ENCODE measurements at regions of chr12 and their contacts with region 1.

Region 1: GRCh38 chr12:53220801-53221202 is 11.2 kb downstream of the RARG start:
- DNase-seq: peak; percentile 94
- ATAC-seq: peak; percentile 38
- H3K4me3 Mint-ChIP-seq: peak overlapping the region; percentile 90
- H3K27ac Mint-ChIP-seq: peak overlapping the region; percentile 98
- H3K4me1 Mint-ChIP-seq: peaks cover 75% of the 10 kb centered on the region
- H3K27me3 Mint-ChIP-seq: peaks cover 7% of the 10 kb centered on the region; the same call in 1 of the 2 replicates
- CTCF ChIP-seq: no peak

Region 2: DNA sequence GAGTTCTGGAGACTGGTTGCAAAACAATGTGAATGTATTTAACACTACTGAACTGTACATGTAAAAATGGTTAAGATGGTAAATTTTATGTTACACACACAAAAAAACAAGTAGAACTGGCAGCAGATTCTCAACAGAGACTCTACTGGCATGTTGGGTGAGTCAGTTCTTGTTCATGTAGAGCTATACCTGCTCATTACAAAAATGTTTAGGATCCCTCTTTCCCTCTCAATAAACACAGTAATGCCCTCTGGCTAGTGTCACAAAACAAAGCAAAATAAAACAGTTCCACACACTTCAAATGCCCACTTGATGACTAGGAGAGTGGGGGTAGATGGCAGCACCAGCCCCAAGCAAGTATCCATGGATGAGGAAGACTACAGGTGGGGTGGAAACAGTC is 54.0 kb before region 1 on chr12:
- CTCF ChIA-PET with region 1: no interaction called
- POLR2A ChIA-PET with region 1: no interaction called
- DNase-seq: no peak
- ATAC-seq: no peak
- H3K4me3 Mint-ChIP-seq: no peak overlapping the region
- H3K27ac Mint-ChIP-seq: no peak overlapping the region
- H3K4me1 Mint-ChIP-seq: 0 out of 2 replicates have a peak, but pooled peaks cover 5% of the 10 kb centered on the region
- H3K27me3 Mint-ChIP-seq: peaks cover 85% of the 10 kb centered on the region
- CTCF ChIP-seq: no peak

Region 3: DNA sequence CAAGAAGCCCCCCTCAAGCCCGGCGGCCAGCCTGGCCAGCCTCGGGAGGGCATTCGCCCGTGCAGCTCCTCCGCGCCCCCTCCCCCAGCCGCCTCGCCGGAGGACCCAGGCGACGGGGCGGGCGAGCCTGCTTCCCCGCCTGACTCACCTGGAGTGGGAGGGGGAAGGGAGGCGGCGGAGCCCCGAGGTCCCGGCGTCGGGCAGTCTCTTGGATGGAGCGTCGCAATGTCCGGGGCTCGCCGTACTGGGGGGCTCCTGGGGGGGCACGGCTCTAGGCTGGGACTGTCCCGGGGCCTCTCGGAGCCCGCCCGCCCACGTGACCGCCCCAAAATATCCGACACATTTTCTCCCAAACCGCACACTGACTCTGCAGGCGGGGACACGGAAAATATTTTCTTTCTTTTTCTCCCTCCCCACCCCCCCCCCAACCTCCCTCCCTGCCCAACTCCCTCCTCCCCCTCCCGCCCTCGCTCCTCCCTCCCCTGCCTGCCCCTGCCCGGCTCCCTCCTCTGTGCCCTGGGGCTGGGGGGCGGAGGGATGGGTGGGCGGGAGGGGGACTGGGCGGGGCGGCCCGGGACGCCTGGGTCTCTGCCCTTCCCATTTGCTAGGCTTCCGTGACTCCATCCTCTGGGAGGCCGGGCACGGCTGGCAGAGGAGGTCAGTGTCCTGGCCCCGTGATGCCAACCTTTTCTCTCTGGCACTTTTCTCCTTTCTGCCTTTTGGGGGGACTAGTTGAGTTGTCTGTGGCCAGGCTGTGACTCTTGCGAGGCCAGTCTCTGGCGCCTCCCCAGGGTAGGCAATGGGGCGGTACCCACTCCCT is 11.2 kb after region 1 on chr12 and contains the start of gene RARG:
- CTCF ChIA-PET with region 1: interaction called, 82 read pairs
- POLR2A ChIA-PET with region 1: interaction called, 7 read pairs
- DNase-seq: peak; percentile 57
- ATAC-seq: peak; percentile 43
- H3K4me3 Mint-ChIP-seq: peak within 1 kb of the TSS; percentile 82
- H3K27ac Mint-ChIP-seq: peak within 1 kb of the TSS; percentile 88
- H3K4me1 Mint-ChIP-seq: peaks cover 77% of the 10 kb centered on the region
- H3K27me3 Mint-ChIP-seq: peaks cover 5% of the 10 kb centered on the region; the same call in 1 of the 2 replicates
- CTCF ChIP-seq: no peak
- total RNA-seq, gene RARG: 68.1 to 77.2 TPM (median 69.7 TPM) in 3 replicates

Region 4: GRCh38 chr12:53241623-53242412 is 21.0 kb after region 1 on chr12:
- CTCF ChIA-PET with region 1: interaction called, 138 read pairs
- POLR2A ChIA-PET with region 1: interaction called, 6 read pairs
- DNase-seq: peak; percentile 66
- ATAC-seq: peak; percentile 75
- H3K4me3 Mint-ChIP-seq: 0 out of 2 replicates have a peak overlapping the region, but pooled peaks have one; percentile 6
- H3K27ac Mint-ChIP-seq: peak overlapping the region; percentile 18; the same call in 1 of the 2 replicates
- H3K4me1 Mint-ChIP-seq: peaks cover 45% of the 10 kb centered on the region
- H3K27me3 Mint-ChIP-seq: peaks cover 2% of the 10 kb centered on the region; the same call in 1 of the 2 replicates
- CTCF ChIP-seq: no peak

Region 5: DNA sequence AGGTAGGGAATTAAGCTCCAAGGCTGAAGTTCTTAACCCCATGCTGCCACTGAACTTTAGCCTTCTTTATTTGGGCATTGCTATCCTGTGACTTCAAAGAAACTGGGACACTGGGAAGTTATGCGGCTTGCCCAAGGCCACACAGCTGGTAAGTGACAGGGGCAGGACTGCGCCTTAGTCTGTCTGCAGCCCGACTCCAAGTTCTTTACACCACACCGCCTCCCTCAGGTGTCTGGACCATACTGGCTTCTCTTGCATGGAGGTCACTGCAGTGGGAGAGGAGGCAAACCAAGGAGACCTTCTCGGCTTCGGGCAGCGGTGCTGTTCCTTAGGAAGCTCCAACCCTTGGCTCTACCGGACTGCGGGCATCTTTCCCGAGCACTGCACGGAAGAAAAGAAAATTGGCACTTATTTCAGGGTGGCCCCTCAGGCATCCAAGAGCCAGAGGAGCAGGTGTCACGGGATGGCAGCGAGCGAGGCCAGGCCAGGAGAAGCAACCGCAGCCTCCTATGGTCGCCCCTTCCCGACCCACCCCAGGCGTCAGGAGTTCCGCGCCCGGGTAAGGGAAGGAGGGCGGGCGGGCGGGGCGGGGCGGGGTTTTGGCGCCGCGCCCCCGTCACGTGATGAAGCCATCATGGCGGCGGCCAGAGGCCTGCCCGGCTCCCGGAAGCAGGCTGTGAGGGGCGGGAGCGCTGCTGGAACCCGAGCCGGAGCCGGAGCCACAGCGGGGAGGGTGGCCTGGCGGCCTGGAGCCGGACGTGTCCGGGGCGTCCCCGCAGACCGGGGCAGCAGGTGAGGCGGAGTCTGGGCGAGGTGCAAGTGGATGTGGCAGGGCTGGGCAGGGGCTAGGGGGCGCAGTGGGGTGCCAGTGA is 30.9 kb after region 1 on chr12:
- CTCF ChIA-PET with region 1: interaction called, 188 read pairs
- POLR2A ChIA-PET with region 1: interaction called, 8 read pairs
- DNase-seq: peak; percentile 86
- ATAC-seq: peak; percentile 87
- H3K4me3 Mint-ChIP-seq: peak overlapping the region; percentile 93
- H3K27ac Mint-ChIP-seq: peak overlapping the region; percentile 94
- H3K4me1 Mint-ChIP-seq: peaks cover 25% of the 10 kb centered on the region
- H3K27me3 Mint-ChIP-seq: no peaks in the 10 kb centered on the region
- CTCF ChIP-seq: no peak

Region 6: DNA sequence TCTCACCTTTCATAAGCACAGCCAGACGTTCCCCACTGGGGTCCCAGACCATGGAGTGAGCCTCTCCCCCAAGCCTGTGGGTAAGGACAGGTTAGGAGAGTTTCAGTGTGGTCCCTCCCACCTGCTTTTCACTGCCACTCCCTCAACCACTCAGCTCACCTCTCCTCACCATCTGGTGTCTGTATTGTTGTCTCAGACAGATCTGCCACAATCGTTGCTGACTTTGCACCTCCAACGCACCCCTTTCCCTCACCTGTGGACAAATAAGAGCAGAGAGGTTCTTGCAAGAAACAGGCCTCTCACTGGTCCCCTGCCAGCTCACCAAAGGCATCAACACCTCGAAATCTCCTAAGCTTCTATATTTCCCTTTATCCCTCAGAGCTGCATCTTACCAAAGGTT is 87.5 kb after region 1 on chr12:
- CTCF ChIA-PET with region 1: no interaction called
- POLR2A ChIA-PET with region 1: no interaction called
- DNase-seq: no peak
- ATAC-seq: no peak
- H3K4me3 Mint-ChIP-seq: no peak overlapping the region
- H3K27ac Mint-ChIP-seq: no peak overlapping the region
- H3K4me1 Mint-ChIP-seq: no peaks in the 10 kb centered on the region
- H3K27me3 Mint-ChIP-seq: no peaks in the 10 kb centered on the region
- CTCF ChIP-seq: no peak

Region 7: DNA sequence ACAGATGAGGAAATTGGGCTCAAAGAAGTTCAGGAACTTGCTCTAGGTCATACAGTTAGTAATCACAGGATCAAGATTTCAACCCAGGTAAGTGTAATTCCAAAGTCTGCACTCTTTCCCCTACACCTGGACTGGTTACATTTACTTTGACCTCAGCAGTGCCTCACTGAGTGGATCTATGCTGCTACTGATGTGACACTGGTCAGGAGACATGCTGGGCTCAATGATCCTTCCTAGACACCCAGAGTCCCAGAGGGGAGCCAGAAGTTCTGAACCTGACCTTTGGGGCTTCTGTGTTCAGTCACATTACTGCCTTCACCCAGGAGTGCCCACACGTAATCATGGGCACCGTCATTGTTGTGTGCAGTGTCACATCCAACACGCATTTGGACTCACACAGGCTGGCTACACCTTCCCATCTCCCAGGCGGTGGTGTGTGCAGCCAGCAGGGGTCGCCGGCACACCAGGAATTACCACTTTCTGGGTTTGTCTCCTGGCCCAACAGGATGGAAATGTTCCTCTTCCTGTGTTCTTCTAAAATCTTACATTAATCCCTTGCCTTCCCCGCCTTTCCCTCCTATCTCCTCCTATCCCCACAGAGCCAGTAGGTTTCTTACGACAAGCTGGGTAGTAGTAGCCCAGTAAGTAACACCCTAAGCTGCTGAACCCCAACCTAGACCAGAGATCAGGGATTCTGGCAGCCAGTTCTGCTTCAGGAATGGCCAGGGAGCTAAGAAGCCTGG is 480.9 kb after region 1 on chr12:
- CTCF ChIA-PET with region 1: no interaction called
- POLR2A ChIA-PET with region 1: no interaction called
- DNase-seq: peak; percentile 90
- ATAC-seq: peak; percentile 94
- H3K4me3 Mint-ChIP-seq: no peak overlapping the region
- H3K27ac Mint-ChIP-seq: no peak overlapping the region
- H3K4me1 Mint-ChIP-seq: peaks cover 21% of the 10 kb centered on the region
- H3K27me3 Mint-ChIP-seq: peaks cover 60% of the 10 kb centered on the region
- CTCF ChIP-seq: peak; percentile 77

Measured in WTC11 (cell line).